Colonic mucosa (tissue), 4 donors: ENCODE measurements at regions of chr2 and their contacts with region 1.

Region 1: GRCh38 chr2:225002039-225002655 is 40.1 kb downstream of the DOCK10 start:
- DNase-seq: peak; percentile 83
- H3K4me3 ChIP-seq: no peak overlapping the region
- H3K27ac ChIP-seq: no peak overlapping the region
- H3K4me1 ChIP-seq: no peaks in the 10 kb centered on the region
- H3K27me3 ChIP-seq: no peaks in the 10 kb centered on the region
- CTCF ChIP-seq: peak; percentile 60

Region 2: GRCh38 chr2:224802407-224802806 is 199.7 kb before region 1 on chr2:
- intact Hi-C with region 1: loop called (anchors 10 kb)
- DNase-seq: no peak
- H3K4me3 ChIP-seq: no peak overlapping the region
- H3K27ac ChIP-seq: no peak overlapping the region
- H3K4me1 ChIP-seq: no peaks in the 10 kb centered on the region
- H3K27me3 ChIP-seq: no peaks in the 10 kb centered on the region
- CTCF ChIP-seq: no peak

Region 3: DNA sequence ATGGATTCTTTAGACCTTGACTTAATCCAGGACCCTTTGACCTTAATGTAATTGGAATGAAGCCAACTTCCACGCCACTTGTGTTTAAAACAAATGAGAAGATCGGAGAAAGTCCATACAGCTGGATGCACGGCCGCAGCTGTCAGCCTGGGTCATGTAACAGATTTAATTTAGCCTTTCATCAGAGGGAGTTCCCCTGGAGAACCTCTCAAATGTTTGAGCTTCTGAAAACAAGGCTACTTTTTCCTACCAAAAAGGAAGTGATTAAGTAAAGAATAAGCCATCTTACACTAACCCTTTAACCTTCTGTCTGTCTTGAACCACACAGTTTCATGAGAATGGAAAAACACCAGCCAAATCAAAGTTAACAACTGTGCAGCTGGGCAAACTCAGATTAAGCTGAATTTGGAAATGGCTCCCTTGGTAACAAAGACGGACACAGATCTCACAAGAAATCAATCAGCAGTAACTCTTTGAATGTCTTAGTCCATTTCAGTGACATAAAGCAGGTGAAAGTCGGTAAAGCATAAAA is 63.4 kb before region 1 on chr2:
- intact Hi-C with region 1: loop called (anchors 10 kb)
- DNase-seq: no peak
- H3K4me3 ChIP-seq: no peak overlapping the region
- H3K27ac ChIP-seq: no peak overlapping the region
- H3K4me1 ChIP-seq: peaks cover 7% of the 10 kb centered on the region
- H3K27me3 ChIP-seq: no peaks in the 10 kb centered on the region
- CTCF ChIP-seq: no peak